ENCODE measurements at regions of chr5 and their contacts with region 1.

Region 1: GRCh38 chr5:137743031-137743640 is 7.2 kb upstream of the KLHL3 start:
- DNase-seq: peak; percentile 31 to 52
- H3K4me3 ChIP-seq: no peak overlapping the region
- H3K27ac ChIP-seq: no peak overlapping the region
- H3K4me1 ChIP-seq: peaks cover 4% of the 10 kb centered on the region; the same call in 1 of the 2 replicates
- H3K27me3 ChIP-seq: no peaks in the 10 kb centered on the region
- CTCF ChIP-seq: peak; percentile 75

Region 2: DNA sequence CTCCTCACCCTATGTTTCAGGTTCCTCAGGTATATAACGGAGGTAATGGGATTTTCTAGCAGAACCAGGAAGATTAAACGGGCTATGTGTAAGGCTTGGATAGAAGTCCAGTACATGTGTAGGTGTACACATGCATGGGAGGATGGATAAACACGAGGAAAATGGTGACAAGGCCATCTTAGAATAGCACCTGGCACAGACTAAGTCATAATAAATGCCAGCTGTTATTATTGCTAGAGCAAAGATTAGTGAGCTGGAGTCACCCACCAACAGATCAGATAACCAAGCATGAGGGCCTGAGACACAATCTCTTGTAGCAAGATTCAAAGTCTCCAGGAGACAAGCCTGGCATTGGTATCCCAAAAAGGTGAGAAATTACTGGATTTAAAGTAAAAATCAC is 265.1 kb before region 1 on chr5:
- CTCF ChIA-PET with region 1: no interaction called
- POLR2A ChIA-PET with region 1: no interaction called
- intact Hi-C with region 1: no loop called
- DNase-seq: no peak
- H3K4me3 ChIP-seq: no peak overlapping the region
- H3K27ac ChIP-seq: no peak overlapping the region
- H3K4me1 ChIP-seq: no peaks in the 10 kb centered on the region
- H3K27me3 ChIP-seq: no peaks in the 10 kb centered on the region
- CTCF ChIP-seq: no peak

Region 3: GRCh38 chr5:137629646-137630045 is 113.5 kb before region 1 on chr5:
- CTCF ChIA-PET with region 1: interaction called, 10 read pairs
- POLR2A ChIA-PET with region 1: no interaction called
- intact Hi-C with region 1: no loop called
- DNase-seq: peak in 1 of 2 experiments; percentile 11
- H3K4me3 ChIP-seq: no peak overlapping the region
- H3K27ac ChIP-seq: no peak overlapping the region
- H3K4me1 ChIP-seq: peaks cover 4% of the 10 kb centered on the region; the same call in 1 of the 2 replicates
- H3K27me3 ChIP-seq: no peaks in the 10 kb centered on the region
- CTCF ChIP-seq: peak; percentile 94

Region 4: GRCh38 chr5:137660349-137660817 is 82.8 kb before region 1 on chr5:
- CTCF ChIA-PET with region 1: interaction called, 28 read pairs
- POLR2A ChIA-PET with region 1: no interaction called
- intact Hi-C with region 1: loop called (anchors 1 kb)
- DNase-seq: peak; percentile 53 to 56
- H3K4me3 ChIP-seq: no peak overlapping the region
- H3K27ac ChIP-seq: no peak overlapping the region
- H3K4me1 ChIP-seq: no peaks in the 10 kb centered on the region
- H3K27me3 ChIP-seq: no peaks in the 10 kb centered on the region
- CTCF ChIP-seq: peak; percentile 84

Region 5: GRCh38 chr5:137714946-137715345 is 28.2 kb before region 1 on chr5:
- CTCF ChIA-PET with region 1: no interaction called
- POLR2A ChIA-PET with region 1: no interaction called
- intact Hi-C with region 1: no loop called
- DNase-seq: no peak
- H3K4me3 ChIP-seq: no peak overlapping the region
- H3K27ac ChIP-seq: no peak overlapping the region
- H3K4me1 ChIP-seq: no peaks in the 10 kb centered on the region
- H3K27me3 ChIP-seq: no peaks in the 10 kb centered on the region
- CTCF ChIP-seq: no peak

Region 6: DNA sequence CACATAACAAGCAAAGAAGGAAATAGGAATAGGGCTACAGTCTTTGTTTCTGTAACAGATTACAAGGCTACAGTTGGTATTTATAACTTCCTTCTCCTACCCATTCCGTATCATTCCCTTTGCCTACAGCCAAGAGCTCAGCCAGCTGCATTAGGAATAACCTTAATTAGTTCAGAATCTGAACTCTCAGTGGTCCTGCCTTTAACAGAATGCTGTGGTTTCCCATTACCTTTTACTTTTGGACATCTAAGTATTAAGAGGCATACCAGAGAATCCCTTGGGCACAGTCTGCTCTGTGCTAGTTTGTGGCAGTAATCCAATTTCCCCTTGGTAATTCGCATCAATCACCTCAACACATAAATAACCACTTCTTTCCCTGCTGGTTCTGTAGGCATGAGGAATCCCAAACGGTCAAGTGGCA is 190.4 kb after region 1 on chr5:
- CTCF ChIA-PET with region 1: no interaction called
- POLR2A ChIA-PET with region 1: no interaction called
- intact Hi-C with region 1: loop called (anchors 1 kb)
- DNase-seq: no peak
- H3K4me3 ChIP-seq: no peak overlapping the region
- H3K27ac ChIP-seq: no peak overlapping the region
- H3K4me1 ChIP-seq: no peaks in the 10 kb centered on the region
- H3K27me3 ChIP-seq: no peaks in the 10 kb centered on the region
- CTCF ChIP-seq: no peak

Measured in PC-9 (cell line).